Left colon (tissue), 2 donors: ENCODE measurements at regions of chr22 and their contacts with region 1.

Region 1: GRCh38 chr22:37862570-37863325 is 13.5 kb downstream of the EIF3L start:
- DNase-seq: no peak
- ATAC-seq: no peak

Region 2: DNA sequence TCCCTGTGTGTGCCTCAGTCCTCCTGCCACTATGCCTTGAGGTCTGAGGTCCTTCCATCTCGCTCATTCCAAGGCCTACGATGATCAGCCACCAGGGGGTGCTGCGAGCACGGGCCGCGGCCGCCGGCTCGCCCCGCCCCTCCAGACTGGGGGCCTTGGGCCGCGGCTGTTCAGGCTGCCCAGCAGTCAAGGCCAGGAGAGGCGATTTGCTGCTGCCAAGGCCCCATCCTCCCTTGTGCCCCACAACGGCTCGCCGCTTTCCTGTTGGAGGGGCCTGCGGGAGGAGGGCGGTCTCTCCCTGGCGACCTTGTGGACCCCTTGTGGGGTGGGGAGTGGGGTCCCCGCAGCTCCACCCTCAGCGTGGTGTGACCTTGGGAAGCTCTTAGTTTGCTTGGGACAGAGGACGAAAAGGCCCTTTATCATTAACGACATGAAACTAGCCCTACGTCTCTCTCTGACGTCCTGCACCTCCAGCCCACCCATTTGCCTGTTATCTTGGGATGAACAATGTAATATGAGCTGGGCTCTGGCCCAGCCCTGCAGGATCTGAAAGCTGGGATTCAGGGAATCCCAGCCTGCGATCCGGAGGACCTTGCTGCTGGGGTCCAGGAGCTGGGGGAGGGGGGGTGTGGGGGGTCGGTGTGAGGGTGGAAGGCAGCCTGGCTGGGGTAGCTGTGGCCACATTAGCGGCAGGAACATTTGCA is 44.9 kb before region 1 on chr22:
- intact Hi-C with region 1: loop called (anchors 5 to 10 kb)
- DNase-seq: peak; percentile 67 to 92
- ATAC-seq: peak; percentile 83

Region 3: GRCh38 chr22:37824674-37825641 is 37.8 kb before region 1 on chr22:
- intact Hi-C with region 1: loop called in 1 of 2 experiments (anchors 5 kb)
- DNase-seq: peak in 1 of 2 donors; percentile 43
- ATAC-seq: peak; percentile 76